ENCODE measurements at regions of chr3 and their contacts with region 1.

Region 1: GRCh38 chr3:188962253-188963247 is 209.2 kb upstream of the TPRG1 start:
- DNase-seq: no peak

Region 2: GRCh38 chr3:188309437-188310269 is 652.9 kb before region 1 on chr3:
- intact Hi-C with region 1: no loop called
- DNase-seq: no peak

Region 3: DNA sequence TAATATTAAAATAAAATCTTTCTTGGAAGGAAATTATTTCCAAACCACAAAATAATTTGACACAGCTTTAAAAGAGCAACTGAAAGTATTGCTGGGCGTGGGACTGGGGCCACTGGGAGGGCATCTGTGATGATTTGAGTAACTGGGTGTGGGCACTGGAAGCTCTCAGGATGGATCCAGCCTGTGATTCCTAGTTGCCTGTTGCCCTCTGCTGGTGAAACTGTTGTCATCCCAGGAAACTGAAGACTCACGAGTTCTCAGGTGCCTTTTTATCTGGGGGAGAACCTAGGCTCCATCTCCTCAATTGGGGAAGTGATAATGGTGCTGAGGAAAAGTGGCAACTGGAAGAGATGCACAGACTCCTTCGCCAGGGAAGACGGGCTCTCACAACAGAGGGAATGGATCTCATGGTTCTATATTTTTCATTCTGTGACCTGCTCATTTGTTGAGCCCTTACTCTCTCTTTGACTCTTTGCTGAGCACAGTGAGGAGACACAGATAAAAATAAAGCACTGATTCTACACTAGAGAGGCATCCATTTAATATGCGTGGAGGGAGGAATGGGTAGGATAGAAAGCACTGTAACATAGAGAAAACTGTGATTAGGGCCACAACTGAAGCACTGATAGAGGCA is 270.8 kb after region 1 on chr3:
- intact Hi-C with region 1: loop called (anchors 10 kb)
- DNase-seq: no peak